Activated CD4-positive, alpha-beta memory T cell treated with anti-CD3 and anti-CD28 coated beads for 36 hours (primary cell): ENCODE measurements at regions of chr3 and their contacts with region 1.

Region 1: DNA sequence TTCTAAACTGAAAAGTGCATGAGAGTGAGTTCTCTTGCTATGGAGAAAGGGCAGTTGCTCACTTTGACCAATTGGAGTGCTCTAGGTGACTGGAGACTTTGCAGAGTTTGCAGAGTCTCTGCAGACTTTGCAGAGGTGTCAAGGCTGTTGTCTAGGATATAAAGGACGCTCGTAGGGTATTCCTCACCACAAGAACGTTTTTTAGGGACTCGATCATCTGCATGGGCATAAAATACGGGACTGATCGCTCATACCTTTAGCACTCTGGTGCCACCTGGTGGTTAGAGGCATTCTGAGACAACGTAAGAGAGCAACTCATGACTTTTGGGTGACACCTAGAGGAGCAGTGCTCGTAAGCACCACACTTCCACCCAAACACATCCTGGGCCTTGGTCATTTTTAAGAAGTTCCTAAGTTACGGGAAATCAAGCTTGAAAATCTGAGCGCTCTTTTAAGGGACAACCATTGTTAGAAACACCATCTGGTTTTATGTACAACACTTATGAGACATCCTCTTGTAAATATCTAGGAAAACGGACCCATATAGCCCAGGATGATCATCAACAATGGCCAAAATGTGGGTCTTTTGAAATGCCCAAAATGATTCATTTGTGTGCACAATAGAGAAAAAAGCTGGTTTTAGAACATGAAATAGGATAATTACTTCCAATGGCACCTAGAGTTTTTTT is 51.6 kb upstream of the XCR1 start:
- DNase-seq: peak; percentile 90
- H3K4me3 Mint-ChIP-seq: no peak overlapping the region
- H3K27ac Mint-ChIP-seq: peak overlapping the region; percentile 2
- H3K4me1 Mint-ChIP-seq: peaks cover 13% of the 10 kb centered on the region
- H3K27me3 Mint-ChIP-seq: peaks cover 15% of the 10 kb centered on the region

Region 2: DNA sequence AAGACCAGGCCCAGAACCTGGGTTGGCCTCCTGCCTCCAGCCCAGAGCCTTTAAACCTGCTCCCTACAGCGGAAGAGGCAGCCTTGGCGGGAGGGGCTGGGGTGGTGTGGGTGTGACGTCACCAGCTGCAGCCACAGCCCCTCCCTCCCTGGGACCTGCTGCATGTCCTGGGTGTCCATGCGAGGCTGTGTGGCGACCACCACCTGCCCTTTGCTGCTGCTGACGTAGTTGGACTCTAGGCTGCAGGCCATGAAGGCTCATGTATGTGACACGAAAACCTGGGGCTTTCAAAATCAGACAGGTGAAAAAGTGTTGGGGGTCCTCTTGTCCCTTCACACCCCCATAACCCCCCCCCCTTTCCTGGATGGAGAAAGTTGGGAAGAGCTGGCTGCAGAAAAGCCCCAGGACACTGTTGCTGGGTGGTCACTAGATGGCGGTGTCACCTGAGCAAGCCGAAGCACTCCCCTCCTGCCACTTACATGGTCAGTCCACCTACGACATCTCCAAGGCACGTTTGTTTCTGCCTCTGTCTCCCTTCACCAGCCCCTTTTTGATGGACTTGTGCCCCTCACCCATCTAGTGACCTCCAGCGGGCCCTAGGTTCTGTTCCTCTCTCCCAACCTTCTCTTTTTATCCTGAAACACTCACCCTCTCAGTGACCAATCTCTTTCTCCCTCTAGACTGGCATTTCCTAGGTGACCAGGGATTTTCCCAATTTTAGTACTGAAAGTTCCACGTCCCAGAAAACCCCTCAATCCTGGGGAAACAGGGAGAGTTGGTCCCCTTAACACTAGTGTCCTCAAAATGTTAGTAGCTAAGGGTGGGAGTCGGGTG is 317.8 kb before region 1 on chr3:
- CTCF ChIA-PET with region 1: interaction called, 36 read pairs
- POLR2A ChIA-PET with region 1: no interaction called
- intact Hi-C with region 1: loop called (anchors 2 kb)
- DNase-seq: peak; percentile 53
- H3K4me3 Mint-ChIP-seq: no peak overlapping the region
- H3K27ac Mint-ChIP-seq: no peak overlapping the region
- H3K4me1 Mint-ChIP-seq: no peaks in the 10 kb centered on the region
- H3K27me3 Mint-ChIP-seq: no peaks in the 10 kb centered on the region

Region 3: GRCh38 chr3:45807681-45808540 is 270.9 kb before region 1 on chr3:
- CTCF ChIA-PET with region 1: no interaction called
- POLR2A ChIA-PET with region 1: no interaction called
- intact Hi-C with region 1: no loop called
- DNase-seq: no peak
- H3K4me3 Mint-ChIP-seq: no peak overlapping the region
- H3K27ac Mint-ChIP-seq: no peak overlapping the region
- H3K4me1 Mint-ChIP-seq: peaks cover 6% of the 10 kb centered on the region
- H3K27me3 Mint-ChIP-seq: no peaks in the 10 kb centered on the region

Region 4: DNA sequence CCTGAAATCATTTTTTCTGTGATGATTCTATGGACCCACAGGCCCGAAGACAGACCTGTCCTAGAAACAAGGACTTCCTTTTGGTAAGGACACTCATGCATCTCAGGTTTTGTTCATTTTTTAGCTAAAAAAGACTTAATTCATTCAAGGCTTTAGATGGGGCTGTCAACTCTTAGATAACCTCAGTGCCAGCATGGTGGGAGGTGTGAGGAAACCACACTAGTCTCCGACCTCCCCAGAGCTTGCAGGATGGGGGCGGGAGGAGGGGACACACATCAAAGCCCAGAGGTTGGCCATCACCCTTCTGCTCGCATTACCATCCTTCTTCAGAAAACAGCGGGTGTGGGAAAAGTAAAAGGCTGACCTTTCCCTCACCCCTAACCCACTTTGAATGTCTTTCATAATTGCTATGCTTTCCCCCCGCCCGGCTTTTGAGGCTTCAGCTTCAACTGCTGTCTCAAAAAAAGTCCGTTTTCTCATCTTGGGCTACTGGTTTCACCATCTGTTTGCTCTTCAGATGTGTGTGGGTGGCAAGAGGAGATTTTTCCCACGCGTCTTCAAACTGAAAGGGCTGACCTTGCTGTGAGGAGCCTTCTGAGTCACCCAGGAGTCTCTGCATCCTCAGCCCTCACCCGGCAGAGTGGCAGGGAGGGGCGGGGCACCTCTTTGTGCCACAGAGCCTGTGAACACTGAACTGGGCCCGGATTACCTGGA is 163.2 kb before region 1 on chr3:
- CTCF ChIA-PET with region 1: interaction called, 10 read pairs
- POLR2A ChIA-PET with region 1: no interaction called
- intact Hi-C with region 1: no loop called
- DNase-seq: peak; percentile 91
- H3K4me3 Mint-ChIP-seq: peak overlapping the region; percentile 46
- H3K27ac Mint-ChIP-seq: peak overlapping the region; percentile 61
- H3K4me1 Mint-ChIP-seq: peaks cover 44% of the 10 kb centered on the region
- H3K27me3 Mint-ChIP-seq: peaks cover 19% of the 10 kb centered on the region

Region 5: DNA sequence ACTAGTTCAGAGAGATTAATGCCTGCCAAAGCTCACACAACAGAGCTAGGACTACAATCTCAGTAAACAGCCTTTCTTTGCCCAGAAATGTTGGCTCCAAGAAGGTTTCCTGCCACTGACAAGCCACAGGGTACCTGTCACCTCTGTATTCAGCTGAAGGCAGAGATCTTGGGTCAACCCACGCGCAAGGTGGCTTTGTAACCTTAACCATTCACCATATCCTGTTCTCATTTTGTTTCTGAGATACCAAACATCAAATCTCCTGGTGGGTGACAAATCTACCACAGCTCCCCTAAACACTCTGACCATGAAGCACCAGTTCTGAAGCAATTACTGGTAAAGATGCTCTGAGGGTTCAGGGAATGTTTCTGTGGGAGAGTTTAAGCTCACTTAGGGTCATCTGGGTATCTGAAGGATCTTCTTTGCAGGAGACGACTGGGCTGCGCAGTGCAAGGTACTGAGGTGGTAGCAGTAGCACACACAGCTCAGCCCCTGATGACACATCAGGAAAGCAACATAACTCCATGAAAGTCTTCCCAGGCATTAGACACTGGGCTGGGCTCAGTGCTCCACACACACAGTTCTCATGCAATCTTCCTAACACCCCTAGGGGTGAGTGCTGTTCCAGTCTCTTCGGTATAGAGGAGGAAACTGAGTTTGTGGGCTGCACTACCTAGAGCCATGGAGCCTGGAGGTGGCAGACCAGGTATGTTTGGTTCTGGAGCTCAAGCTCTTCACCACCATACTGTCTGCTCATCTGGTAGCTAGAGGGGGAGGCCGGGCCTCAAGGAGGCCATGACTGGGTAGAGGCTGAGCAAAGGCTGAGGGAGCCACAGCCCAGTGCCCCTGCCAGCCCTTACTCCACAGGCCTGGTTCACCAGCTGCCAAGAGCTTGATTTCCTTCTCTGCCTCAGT is 127.9 kb before region 1 on chr3:
- CTCF ChIA-PET with region 1: interaction called, 445 read pairs
- POLR2A ChIA-PET with region 1: no interaction called
- intact Hi-C with region 1: no loop called
- DNase-seq: peak; percentile 85
- H3K4me3 Mint-ChIP-seq: no peak overlapping the region
- H3K27ac Mint-ChIP-seq: peak overlapping the region; percentile 77
- H3K4me1 Mint-ChIP-seq: peaks cover 50% of the 10 kb centered on the region
- H3K27me3 Mint-ChIP-seq: peaks cover under 1% of the 10 kb centered on the region

Region 6: GRCh38 chr3:45972534-45973402 is 106.1 kb before region 1 on chr3:
- CTCF ChIA-PET with region 1: interaction called, 93 read pairs
- POLR2A ChIA-PET with region 1: no interaction called
- intact Hi-C with region 1: no loop called
- DNase-seq: peak; percentile 41
- H3K4me3 Mint-ChIP-seq: no peak overlapping the region
- H3K27ac Mint-ChIP-seq: peak overlapping the region; percentile 70
- H3K4me1 Mint-ChIP-seq: peaks cover 66% of the 10 kb centered on the region
- H3K27me3 Mint-ChIP-seq: no peaks in the 10 kb centered on the region

Region 7: DNA sequence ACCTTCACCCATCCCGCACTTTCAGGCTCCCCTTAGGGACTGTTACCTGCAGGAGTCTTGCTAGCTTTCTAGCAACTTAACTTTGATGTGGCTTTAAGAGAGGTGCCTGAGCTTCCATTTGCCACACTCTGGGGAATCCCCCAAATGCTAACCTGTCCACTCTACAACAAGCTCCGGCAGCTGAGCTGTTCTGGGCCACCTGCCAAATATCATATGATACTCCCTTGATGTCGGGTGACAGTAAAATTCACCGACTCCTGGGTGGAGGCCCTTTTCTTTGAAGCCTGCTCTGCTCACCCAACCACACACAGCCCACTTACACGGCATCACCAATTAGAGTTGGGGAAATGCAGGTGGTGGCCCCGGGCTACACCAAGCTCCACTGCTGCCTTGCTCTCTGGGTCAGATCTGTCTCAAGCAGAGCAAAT is 13.5 kb before region 1 on chr3:
- CTCF ChIA-PET with region 1: interaction called, 34 read pairs
- POLR2A ChIA-PET with region 1: no interaction called
- intact Hi-C with region 1: no loop called
- DNase-seq: peak; percentile 85
- H3K4me3 Mint-ChIP-seq: peak overlapping the region; percentile 22
- H3K27ac Mint-ChIP-seq: peak overlapping the region; percentile 53
- H3K4me1 Mint-ChIP-seq: peaks cover 67% of the 10 kb centered on the region
- H3K27me3 Mint-ChIP-seq: peaks cover 32% of the 10 kb centered on the region

Region 8: DNA sequence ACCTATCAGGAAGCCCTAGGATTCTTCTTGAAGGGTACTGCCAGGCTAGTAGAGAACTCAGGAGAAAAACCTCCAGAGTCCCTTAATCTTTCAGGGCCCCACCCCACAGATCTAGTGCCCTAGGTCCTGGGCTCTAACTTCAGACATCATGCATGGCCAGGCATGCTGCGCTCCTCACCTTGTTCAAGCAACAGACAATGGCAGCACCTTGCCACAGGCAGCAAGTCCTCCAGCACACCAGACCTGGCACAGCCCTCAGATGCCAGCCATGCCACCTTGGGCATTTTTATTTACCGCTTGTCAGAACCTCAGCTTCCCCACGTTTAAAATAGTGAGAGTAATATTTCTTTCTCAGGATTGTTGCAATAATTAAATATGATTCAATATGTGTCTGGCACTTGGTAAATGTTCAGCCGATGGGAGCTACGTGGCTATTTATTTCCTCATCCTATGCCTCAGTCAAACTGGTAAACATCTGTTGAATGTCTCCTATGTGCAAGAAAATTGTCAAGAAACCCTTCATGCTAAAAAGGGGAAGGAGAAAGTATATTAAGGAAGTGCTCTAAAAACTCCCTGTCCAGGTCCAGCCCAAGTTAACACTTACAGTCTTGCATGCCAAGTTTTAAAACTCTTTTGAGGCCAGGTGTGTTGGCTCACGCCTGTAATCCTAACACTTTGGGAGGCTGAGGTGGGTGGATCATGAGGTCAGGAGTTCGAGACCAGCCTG is 143.7 kb after region 1 on chr3:
- CTCF ChIA-PET with region 1: no interaction called
- POLR2A ChIA-PET with region 1: no interaction called
- intact Hi-C with region 1: no loop called
- DNase-seq: no peak
- H3K4me3 Mint-ChIP-seq: no peak overlapping the region
- H3K27ac Mint-ChIP-seq: no peak overlapping the region
- H3K4me1 Mint-ChIP-seq: no peaks in the 10 kb centered on the region
- H3K27me3 Mint-ChIP-seq: peaks cover 3% of the 10 kb centered on the region

Region 9: DNA sequence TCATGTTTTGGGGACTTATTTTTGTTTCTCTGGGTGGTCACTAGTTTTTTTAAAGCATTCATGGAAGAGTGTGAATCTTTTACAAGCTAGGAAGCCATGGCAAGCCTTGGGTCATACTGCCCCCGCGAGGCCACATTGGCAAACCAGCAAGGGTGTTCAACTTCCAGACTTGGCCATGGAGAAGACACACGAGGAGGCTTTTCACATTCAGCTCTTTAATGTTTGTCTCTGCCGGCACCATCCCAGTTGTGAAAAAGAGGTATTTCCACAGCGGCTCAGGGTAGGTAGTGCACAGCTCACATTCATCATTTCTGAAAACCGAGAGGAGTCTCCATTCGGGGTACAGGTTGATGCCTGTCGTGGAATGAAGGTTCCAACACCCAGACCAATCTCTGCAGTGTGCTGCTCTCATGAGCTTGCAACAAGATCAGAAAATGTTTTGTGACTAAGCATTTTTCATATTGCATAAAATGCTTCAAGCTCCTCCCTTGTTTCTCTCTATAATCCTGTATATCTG is 299.6 kb after region 1 on chr3:
- CTCF ChIA-PET with region 1: interaction called, 45 read pairs
- POLR2A ChIA-PET with region 1: interaction called, 3 read pairs
- intact Hi-C with region 1: no loop called
- DNase-seq: peak; percentile 79
- H3K4me3 Mint-ChIP-seq: no peak overlapping the region
- H3K27ac Mint-ChIP-seq: no peak overlapping the region
- H3K4me1 Mint-ChIP-seq: peaks cover 36% of the 10 kb centered on the region
- H3K27me3 Mint-ChIP-seq: peaks cover 13% of the 10 kb centered on the region